ENCODE measurements at regions of chr6 and their contacts with region 1.

Region 1: DNA sequence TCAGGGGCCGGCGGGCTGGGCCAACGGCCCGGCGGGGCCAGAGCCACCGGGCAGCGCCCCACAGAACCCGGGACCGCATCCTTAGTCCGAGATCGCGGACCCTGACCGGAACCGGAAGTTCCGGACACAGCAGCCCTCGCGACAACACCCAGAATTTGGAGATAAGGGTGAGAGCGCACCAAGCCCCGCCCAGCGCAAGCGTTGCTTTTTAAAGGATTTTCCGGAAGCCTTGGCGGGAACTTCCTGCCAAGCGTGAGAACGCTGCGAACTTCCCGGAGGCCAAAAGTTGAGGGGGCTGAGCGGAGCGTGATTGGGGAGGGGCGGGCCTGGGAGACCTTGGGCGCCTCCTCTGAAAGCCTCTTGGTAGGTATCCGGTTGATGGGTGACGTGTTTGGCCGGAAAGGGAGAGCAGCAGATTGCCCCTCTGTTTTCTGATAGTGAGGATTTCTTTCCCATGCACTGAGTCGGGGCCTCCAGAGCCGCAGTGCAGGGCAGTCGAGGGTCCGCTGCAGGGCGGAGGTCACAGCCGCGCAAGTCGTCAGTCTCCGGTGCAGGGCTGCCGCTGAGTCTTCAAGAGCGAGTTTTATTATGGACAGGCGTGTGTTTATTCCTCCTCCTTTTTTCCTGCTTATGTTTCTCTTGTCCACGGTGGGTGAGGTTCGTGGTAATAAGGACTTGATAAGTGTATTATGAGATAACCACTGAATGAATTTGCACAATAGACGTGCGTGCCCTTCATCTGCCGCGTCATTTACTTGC is at the start of gene MTRF1L:
- DNase-seq: peak; percentile 93 to 96
- H3K4me3 ChIP-seq: peak within 1 kb of the TSS; percentile 67 to 91
- H3K27ac ChIP-seq: peak within 1 kb of the TSS; percentile 84 to 87
- H3K4me1 ChIP-seq: peaks cover 0 to 43% (median 23%) of the 10 kb centered on the region in 4 donors
- H3K27me3 ChIP-seq: no peaks in the 10 kb centered on the region
- CTCF ChIP-seq: no peak

Region 2: GRCh38 chr6:152982768-152983636 is 19.8 kb before region 1 on chr6 and contains the start of gene FBXO5:
- intact Hi-C with region 1: loop called (anchors 1 kb)
- DNase-seq: peak; percentile 97 to 99
- H3K4me3 ChIP-seq: peak within 1 kb of the TSS; percentile 61 to 87
- H3K27ac ChIP-seq: peak within 1 kb of the TSS; percentile 86 to 89
- H3K4me1 ChIP-seq: peaks cover 10 to 21% (median 18%) of the 10 kb centered on the region in 4 donors
- H3K27me3 ChIP-seq: no peaks in the 10 kb centered on the region
- CTCF ChIP-seq: no peak

Region 3: DNA sequence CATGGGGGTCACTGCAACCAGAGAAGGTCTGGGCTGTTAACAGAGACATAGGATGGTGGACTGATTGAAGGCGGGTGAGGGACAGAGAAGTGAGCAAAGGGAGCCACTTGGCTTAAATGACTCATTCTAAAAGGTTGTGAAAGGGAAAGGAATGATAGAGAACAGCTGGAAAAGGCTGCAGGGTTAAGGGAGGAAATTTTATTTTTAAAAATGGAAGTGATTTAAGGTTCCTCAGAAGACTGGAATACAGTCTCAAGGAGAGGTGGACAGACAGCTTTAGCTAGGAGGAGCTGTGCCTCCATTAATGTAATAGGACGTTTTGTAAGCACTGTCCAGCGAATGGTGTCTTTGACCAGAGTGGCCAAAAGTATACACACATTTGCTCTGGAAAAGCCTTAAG is 81.6 kb after region 1 on chr6:
- intact Hi-C with region 1: no loop called
- DNase-seq: no peak
- H3K4me3 ChIP-seq: no peak overlapping the region
- H3K27ac ChIP-seq: no peak overlapping the region
- H3K4me1 ChIP-seq: peaks cover 0 to 20% (median 0%) of the 10 kb centered on the region in 4 donors
- H3K27me3 ChIP-seq: no peaks in the 10 kb centered on the region
- CTCF ChIP-seq: no peak

Measured in tibial artery (tissue), 4 donors.